BJ (cell line): ENCODE measurements at regions of chr20 and their contacts with region 1.

Region 1: GRCh38 chr20:60210779-60211617 is 252.8 kb downstream of the CDH26 start:
- DNase-seq: no peak
- H3K4me3 ChIP-seq: no peak overlapping the region
- H3K27me3 ChIP-seq: peaks cover 8% of the 10 kb centered on the region
- CTCF ChIP-seq: peak; percentile 94

Region 2: DNA sequence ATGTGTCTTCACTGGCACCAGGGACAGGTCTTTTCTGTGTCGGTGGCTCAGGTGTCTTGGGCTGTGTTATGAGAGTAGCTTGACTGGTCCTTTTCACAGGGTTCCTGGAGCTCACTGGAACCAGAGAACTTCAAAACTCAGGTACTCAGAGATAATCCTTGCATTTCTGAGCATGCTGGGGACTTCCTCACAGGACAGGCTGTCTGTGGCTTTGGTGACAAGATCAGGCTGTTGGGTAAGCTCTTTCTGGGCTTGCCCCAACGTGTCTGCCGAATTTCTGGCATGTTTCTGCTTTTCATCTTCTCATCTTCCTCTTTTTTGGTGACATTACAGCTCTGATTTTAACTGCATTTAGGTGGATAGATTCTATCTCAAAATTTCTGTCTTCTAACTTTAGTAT is 17.3 kb after region 1 on chr20:
- CTCF ChIA-PET with region 1: interaction called, 20 read pairs
- POLR2A ChIA-PET with region 1: no interaction called
- DNase-seq: no peak
- H3K4me3 ChIP-seq: no peak overlapping the region
- H3K27me3 ChIP-seq: no peaks in the 10 kb centered on the region
- CTCF ChIP-seq: no peak

Region 3: GRCh38 chr20:60249436-60249835 is 38.4 kb after region 1 on chr20:
- CTCF ChIA-PET with region 1: interaction called, 13 read pairs
- POLR2A ChIA-PET with region 1: no interaction called
- DNase-seq: peak; percentile 75
- H3K4me3 ChIP-seq: no peak overlapping the region
- H3K27me3 ChIP-seq: no peaks in the 10 kb centered on the region
- CTCF ChIP-seq: no peak

Region 4: DNA sequence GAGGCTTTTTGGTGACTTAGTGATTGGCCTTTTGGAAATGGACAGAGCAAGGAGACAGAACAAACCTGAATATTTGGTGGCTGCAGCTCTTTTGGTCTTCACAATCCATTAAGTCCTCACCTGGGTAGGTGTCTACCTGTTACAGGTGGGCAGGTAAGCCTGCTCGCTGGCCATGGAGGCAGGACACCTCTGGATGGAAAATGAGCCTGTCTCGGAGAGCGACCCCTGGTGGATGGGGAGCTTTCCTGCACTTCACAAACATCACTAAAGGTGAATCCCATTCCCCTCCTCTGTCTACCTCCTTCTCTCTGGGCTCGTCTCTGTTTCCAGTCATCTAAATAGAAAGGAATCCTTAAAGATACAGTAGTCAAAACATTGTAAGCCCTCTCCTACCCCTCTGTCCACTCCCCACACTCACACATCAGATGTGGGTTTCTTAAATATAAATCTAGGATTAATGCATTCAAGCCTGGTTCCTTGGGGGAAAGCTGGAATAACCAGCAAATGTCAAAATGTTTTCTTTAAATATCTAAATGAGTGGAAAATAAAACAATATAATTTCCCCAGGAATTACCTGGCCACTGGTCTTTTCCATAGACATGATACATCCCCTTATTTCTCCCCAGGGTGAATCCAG is 52.1 kb after region 1 on chr20:
- CTCF ChIA-PET with region 1: interaction called, 49 read pairs
- POLR2A ChIA-PET with region 1: no interaction called
- DNase-seq: no peak
- H3K4me3 ChIP-seq: no peak overlapping the region
- H3K27me3 ChIP-seq: peaks cover 1% of the 10 kb centered on the region; the same call in 1 of the 2 replicates
- CTCF ChIP-seq: peak; percentile 80

Region 5: GRCh38 chr20:61234803-61235113 is 1023.8 kb after region 1 on chr20:
- CTCF ChIA-PET with region 1: interaction called, 16 read pairs
- POLR2A ChIA-PET with region 1: no interaction called
- DNase-seq: no peak
- H3K4me3 ChIP-seq: no peak overlapping the region
- H3K27me3 ChIP-seq: no peaks in the 10 kb centered on the region
- CTCF ChIP-seq: no peak

Region 6: GRCh38 chr20:61263084-61263695 is 1052.2 kb after region 1 on chr20:
- CTCF ChIA-PET with region 1: interaction called, 17 read pairs
- POLR2A ChIA-PET with region 1: no interaction called
- DNase-seq: no peak
- H3K4me3 ChIP-seq: no peak overlapping the region
- H3K27me3 ChIP-seq: no peaks in the 10 kb centered on the region
- CTCF ChIP-seq: peak; percentile 98